PC-9 (cell line): ENCODE measurements at regions of chr12 and their contacts with region 1.

Region 1: GRCh38 chr12:124680863-124681778 is 113.7 kb upstream of the NCOR2 start:
- DNase-seq: peak; percentile 72 to 96
- H3K4me3 ChIP-seq: no peak overlapping the region; the same call in 1 of the 2 replicates
- H3K27ac ChIP-seq: peak overlapping the region; percentile 95
- H3K4me1 ChIP-seq: peaks cover 88% of the 10 kb centered on the region
- H3K27me3 ChIP-seq: no peaks in the 10 kb centered on the region
- CTCF ChIP-seq: peak; percentile 38

Region 2: DNA sequence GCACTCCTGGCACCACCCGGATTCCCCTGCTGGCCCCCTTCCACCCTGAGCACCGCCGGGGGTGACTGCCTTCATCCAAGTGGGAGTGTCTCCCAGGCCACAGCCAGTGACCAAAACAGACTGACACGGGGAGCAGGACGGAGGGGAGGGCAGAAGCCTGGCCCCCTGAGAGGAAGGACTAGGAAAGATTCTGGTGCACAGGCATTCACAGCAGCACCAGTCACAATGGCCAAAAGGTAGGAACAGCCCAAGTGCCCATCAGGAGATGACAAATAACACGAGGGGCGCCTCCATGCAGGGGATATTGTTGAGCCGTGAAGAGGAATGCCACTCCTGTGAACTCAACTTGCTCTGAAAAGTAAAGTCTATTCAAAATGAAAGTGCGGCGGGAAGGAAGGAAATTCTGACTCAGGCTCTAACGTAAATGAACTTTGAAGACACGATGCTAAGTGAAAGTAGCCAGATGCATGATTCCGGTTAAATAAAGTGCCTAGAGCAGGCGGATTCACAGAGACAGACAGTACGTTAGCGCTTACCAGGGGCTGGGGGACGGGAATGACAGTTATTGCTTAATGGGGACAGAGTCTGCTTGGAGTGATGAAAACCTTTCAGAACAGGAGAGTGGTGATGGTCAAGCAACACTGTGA is 32.4 kb after region 1 on chr12:
- CTCF ChIA-PET with region 1: no interaction called
- POLR2A ChIA-PET with region 1: no interaction called
- intact Hi-C with region 1: loop called (anchors 5 kb)
- DNase-seq: peak in 1 of 2 experiments; percentile 62
- H3K4me3 ChIP-seq: no peak overlapping the region
- H3K27ac ChIP-seq: no peak overlapping the region
- H3K4me1 ChIP-seq: peaks cover 26% of the 10 kb centered on the region
- H3K27me3 ChIP-seq: no peaks in the 10 kb centered on the region
- CTCF ChIP-seq: no peak